Activated B cell treated with CpG ODN at 0.5 μM for 24 hours (primary cell): ENCODE measurements at regions of chr1 and their contacts with region 1.

Region 1: DNA sequence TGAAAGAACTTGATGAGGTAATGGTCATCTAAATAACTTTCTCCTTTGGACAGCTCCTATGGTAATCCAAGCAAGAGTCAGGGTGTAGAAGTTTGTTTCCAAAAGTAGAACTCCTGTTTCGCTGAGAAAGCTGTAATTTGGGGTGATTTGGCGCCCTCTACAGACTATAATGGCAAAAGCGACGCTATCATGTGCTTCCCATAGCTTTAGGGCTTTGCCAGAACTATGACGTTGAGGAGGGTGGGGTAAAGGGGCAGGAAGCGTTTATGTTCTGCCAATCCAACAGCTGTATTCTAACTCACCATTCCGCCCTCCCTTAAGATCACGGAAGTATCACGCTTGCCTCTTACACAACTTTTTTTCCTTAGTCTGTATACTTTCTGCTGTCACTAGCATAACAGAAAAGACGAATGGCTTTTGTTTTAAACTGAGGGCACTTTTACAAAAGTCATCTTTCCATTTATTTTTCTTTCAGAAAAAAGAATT is at the start of gene FMO4:
- DNase-seq: peak; percentile 36
- ATAC-seq: peak; percentile 99
- H3K4me3 Mint-ChIP-seq: peak within 1 kb of the TSS; percentile 76
- H3K27ac Mint-ChIP-seq: peak within 1 kb of the TSS; percentile 88
- H3K4me1 Mint-ChIP-seq: peaks cover 21% of the 10 kb centered on the region
- H3K27me3 Mint-ChIP-seq: no peaks in the 10 kb centered on the region
- CTCF ChIP-seq: peak; percentile 22
- total RNA-seq, gene FMO4: 3.0 and 3.4 TPM in 2 replicates

Region 2: GRCh38 chr1:169367486-169368405 is 1946.1 kb before region 1 on chr1 and contains the starts of genes BLZF1 and NME7:
- CTCF ChIA-PET with region 1: no interaction called
- POLR2A ChIA-PET with region 1: no interaction called
- intact Hi-C with region 1: loop called (anchors 5 kb)
- DNase-seq: peak; percentile 94
- ATAC-seq: peak; percentile 99
- H3K4me3 Mint-ChIP-seq: peak within 1 kb of the TSS; percentile 56
- H3K27ac Mint-ChIP-seq: no peak within 1 kb of the TSS
- H3K4me1 Mint-ChIP-seq: peaks cover 18% of the 10 kb centered on the region
- H3K27me3 Mint-ChIP-seq: no peaks in the 10 kb centered on the region
- CTCF ChIP-seq: no peak
- total RNA-seq, gene BLZF1: 13.8 and 14.3 TPM in 2 replicates
- total RNA-seq, gene NME7: 14.5 and 16.0 TPM in 2 replicates

Region 3: DNA sequence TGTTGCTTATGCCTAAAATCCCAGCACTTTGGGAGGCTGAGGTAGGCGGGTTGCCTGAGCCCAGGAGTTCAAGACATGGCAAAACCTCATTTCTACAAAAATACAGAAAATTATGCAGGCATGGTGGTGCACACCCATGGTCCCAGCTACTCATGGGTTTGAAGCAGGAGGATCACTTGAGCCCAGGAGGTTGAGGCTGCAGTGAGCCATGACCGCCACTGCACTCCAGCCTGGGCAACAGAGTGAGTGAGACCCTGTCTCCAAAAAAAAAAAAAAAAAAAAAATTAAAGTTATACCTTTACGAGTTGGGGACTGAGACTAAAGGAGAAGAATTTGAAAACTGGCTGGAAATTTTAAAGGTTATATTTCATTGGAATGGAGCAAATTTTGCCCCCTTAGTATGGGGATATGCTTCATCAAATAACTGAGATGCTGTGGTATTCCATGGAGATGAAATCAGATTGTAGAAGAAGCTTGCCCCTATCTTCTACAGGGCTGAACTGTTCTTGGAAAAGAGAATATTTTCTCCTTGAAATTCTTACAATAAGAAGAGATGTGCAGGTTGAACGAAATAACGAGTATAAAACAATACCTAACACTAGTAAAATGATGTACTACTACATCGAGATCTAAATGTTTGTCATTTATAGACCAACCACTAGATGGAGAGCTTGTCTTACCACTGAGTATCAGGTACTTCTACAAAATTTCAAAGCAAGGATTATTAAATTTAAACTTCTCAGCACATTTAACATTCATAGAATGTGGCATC is 1385.3 kb before region 1 on chr1:
- CTCF ChIA-PET with region 1: interaction called, 7 read pairs
- POLR2A ChIA-PET with region 1: no interaction called
- intact Hi-C with region 1: loop called (anchors 5 kb)
- DNase-seq: no peak
- ATAC-seq: peak; percentile 49
- H3K4me3 Mint-ChIP-seq: no peak overlapping the region
- H3K27ac Mint-ChIP-seq: no peak overlapping the region
- H3K4me1 Mint-ChIP-seq: no peaks in the 10 kb centered on the region
- H3K27me3 Mint-ChIP-seq: no peaks in the 10 kb centered on the region
- CTCF ChIP-seq: peak; percentile 60

Region 4: GRCh38 chr1:170531758-170532657 is 781.9 kb before region 1 on chr1 and contains the start of gene GORAB:
- CTCF ChIA-PET with region 1: no interaction called
- POLR2A ChIA-PET with region 1: no interaction called
- intact Hi-C with region 1: loop called (anchors 2 kb)
- DNase-seq: peak; percentile 77
- ATAC-seq: peak; percentile 98
- H3K4me3 Mint-ChIP-seq: no peak within 1 kb of the TSS
- H3K27ac Mint-ChIP-seq: no peak within 1 kb of the TSS
- H3K4me1 Mint-ChIP-seq: peaks cover 13% of the 10 kb centered on the region
- H3K27me3 Mint-ChIP-seq: peaks cover 4% of the 10 kb centered on the region
- CTCF ChIP-seq: no peak
- total RNA-seq, gene GORAB: 20.0 and 20.2 TPM in 2 replicates

Region 5: GRCh38 chr1:170967042-170967910 is 346.6 kb before region 1 on chr1:
- CTCF ChIA-PET with region 1: interaction called, 74 read pairs
- POLR2A ChIA-PET with region 1: no interaction called
- intact Hi-C with region 1: no loop called
- DNase-seq: no peak
- ATAC-seq: no peak
- H3K4me3 Mint-ChIP-seq: no peak overlapping the region
- H3K27ac Mint-ChIP-seq: no peak overlapping the region
- H3K4me1 Mint-ChIP-seq: no peaks in the 10 kb centered on the region
- H3K27me3 Mint-ChIP-seq: no peaks in the 10 kb centered on the region
- CTCF ChIP-seq: no peak

Region 6: GRCh38 chr1:171245458-171246064 is 68.3 kb before region 1 on chr1:
- CTCF ChIA-PET with region 1: interaction called, 172 read pairs
- POLR2A ChIA-PET with region 1: interaction called, 11 read pairs
- intact Hi-C with region 1: loop called (anchors 1 kb)
- DNase-seq: no peak
- ATAC-seq: peak; percentile 37
- H3K4me3 Mint-ChIP-seq: no peak overlapping the region
- H3K27ac Mint-ChIP-seq: no peak overlapping the region
- H3K4me1 Mint-ChIP-seq: no peaks in the 10 kb centered on the region
- H3K27me3 Mint-ChIP-seq: peaks cover 4% of the 10 kb centered on the region
- CTCF ChIP-seq: no peak

Region 7: GRCh38 chr1:171485375-171486047 is 171.6 kb after region 1 on chr1 and contains the start of gene PRRC2C:
- CTCF ChIA-PET with region 1: interaction called, 3 read pairs
- POLR2A ChIA-PET with region 1: interaction called, 9 read pairs
- intact Hi-C with region 1: loop called (anchors 1 kb)
- DNase-seq: peak; percentile 81
- ATAC-seq: peak; percentile 86
- H3K4me3 Mint-ChIP-seq: peak within 1 kb of the TSS; percentile 94
- H3K27ac Mint-ChIP-seq: peak within 1 kb of the TSS; percentile 94
- H3K4me1 Mint-ChIP-seq: peaks cover 56% of the 10 kb centered on the region
- H3K27me3 Mint-ChIP-seq: no peaks in the 10 kb centered on the region
- CTCF ChIP-seq: no peak
- total RNA-seq, gene PRRC2C: 262 and 272 TPM in 2 replicates